BJ (cell line): ENCODE measurements at regions of chr10 and their contacts with region 1.

Region 1: GRCh38 chr10:24617771-24618391 is 105.8 kb downstream of the ARHGAP21 start:
- DNase-seq: no peak
- H3K4me3 ChIP-seq: no peak overlapping the region
- H3K27me3 ChIP-seq: no peaks in the 10 kb centered on the region
- CTCF ChIP-seq: peak; percentile 72

Region 2: DNA sequence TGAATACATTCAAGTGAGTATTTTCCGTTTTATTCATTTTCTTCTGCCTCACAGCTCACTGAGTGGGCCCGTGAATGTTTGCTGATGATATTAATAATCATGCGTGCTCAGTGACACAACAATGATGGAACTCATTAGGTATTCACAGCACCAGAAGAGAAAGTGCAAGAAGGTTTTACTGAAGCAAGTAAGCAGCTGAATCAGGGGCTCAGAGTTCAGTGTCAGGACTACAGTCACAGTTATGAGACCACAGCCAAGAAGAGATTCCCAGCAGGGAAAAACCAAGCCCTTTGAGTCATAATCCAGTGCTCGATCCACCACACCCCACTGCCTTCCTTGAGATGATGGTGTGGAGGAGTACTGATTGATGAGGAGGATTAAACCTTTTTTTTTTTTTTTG is 161.6 kb before region 1 on chr10:
- CTCF ChIA-PET with region 1: no interaction called
- POLR2A ChIA-PET with region 1: no interaction called
- DNase-seq: peak; percentile 82
- H3K4me3 ChIP-seq: no peak overlapping the region
- H3K27me3 ChIP-seq: no peaks in the 10 kb centered on the region
- CTCF ChIP-seq: no peak

Region 3: GRCh38 chr10:24603333-24603732 is 14.5 kb before region 1 on chr10:
- CTCF ChIA-PET with region 1: interaction called, 19 read pairs
- POLR2A ChIA-PET with region 1: no interaction called
- DNase-seq: no peak
- H3K4me3 ChIP-seq: no peak overlapping the region
- H3K27me3 ChIP-seq: no peaks in the 10 kb centered on the region
- CTCF ChIP-seq: no peak